Heart right ventricle (tissue), 16 donors: ENCODE measurements at regions of chr12 and their contacts with region 1.

Region 1: DNA sequence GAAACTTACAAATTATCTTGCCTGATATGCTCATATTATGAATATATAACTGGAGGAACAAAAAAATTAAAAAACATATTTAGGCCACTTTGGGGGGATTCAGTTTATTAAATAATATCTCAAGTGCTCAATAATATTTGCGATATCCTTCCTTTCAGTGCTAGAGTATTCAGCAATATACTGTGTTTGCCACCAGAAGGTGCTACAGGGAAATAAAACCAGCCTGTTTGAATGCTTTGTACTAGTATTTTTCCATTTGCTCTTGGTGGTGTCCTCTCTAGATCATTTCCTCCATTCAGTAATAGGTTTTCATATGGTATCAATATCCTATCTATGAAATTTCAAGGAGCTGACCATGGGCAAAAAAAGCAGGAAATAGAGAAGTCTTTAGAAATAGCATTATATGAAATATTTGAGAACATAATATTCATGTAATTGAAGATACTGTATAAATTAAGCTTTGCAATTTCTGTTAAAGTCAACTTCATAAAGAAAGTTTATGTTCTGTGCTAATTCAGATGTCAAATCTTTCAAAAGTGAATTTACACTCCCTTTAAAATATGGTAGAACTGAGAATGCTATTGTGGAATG is 106.2 kb upstream of the NAV3 start:
- DNase-seq: no peak
- ATAC-seq: peak in 6 of 8 donors; percentile 75 to 88 (median 79)
- H3K4me3 ChIP-seq: no peak overlapping the region
- H3K27ac ChIP-seq: no peak overlapping the region
- H3K4me1 ChIP-seq: peaks cover 0 to 14% (median 3%) of the 10 kb centered on the region in 9 donors
- H3K27me3 ChIP-seq: no peaks in the 10 kb centered on the region
- CTCF ChIP-seq: peak; percentile 36 to 87 (median 68)

Region 2: DNA sequence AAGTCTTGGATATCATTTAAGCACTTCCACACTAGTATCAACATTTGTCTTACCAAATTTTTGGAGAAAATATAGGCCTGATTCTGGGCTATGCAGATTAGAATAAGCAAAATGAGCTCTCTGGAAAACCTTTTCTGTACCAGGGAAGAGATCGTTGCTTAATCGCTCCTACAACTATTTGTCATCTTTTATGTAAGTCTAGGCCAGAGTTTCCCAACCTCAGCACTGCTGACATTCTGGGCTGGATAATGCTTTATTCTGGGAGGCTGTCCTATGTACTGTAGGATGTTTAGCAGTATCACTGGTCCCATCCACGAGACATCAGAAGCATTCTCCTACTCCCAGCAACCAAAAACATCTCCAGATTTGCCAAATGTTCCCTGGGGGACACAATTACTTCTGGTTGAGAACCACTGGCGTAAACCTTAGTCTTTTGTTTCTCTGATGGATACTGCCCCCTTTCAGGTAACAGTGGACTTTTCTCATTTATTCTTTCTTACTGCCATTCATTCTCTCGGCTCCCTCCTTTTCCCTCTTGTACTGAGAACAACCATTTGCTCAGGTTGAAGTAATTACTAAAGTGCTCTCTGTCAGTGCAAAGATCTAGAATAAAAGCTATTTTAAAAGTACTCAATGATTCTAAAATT is 342.2 kb before region 1 on chr12:
- intact Hi-C with region 1: no loop called
- DNase-seq: no peak
- ATAC-seq: peak in 1 of 8 donors; percentile 27
- H3K4me3 ChIP-seq: no peak overlapping the region
- H3K27ac ChIP-seq: no peak overlapping the region
- H3K4me1 ChIP-seq: peaks cover 0 to 5% (median 0%) of the 10 kb centered on the region in 9 donors
- H3K27me3 ChIP-seq: no peaks in the 10 kb centered on the region
- CTCF ChIP-seq: no peak

Region 3: GRCh38 chr12:77855548-77855947 is 131.1 kb after region 1 on chr12:
- intact Hi-C with region 1: loop called in 1 of 10 experiments (anchors 10 kb)
- DNase-seq: peak; percentile 20 to 43
- ATAC-seq: peak; percentile 71 to 100 (median 86)
- H3K4me3 ChIP-seq: peak overlapping the region in 4 of 10 donors; percentile 11 to 32 (median 18)
- H3K27ac ChIP-seq: peak overlapping the region in 6 of 10 donors; percentile 25 to 62 (median 46)
- H3K4me1 ChIP-seq: peaks cover 0 to 42% (median 6%) of the 10 kb centered on the region in 9 donors
- H3K27me3 ChIP-seq: no peaks in the 10 kb centered on the region
- CTCF ChIP-seq: no peak

Region 4: GRCh38 chr12:77914081-77914488 is 189.6 kb after region 1 on chr12:
- intact Hi-C with region 1: loop called in 1 of 10 experiments (anchors 5 kb)
- DNase-seq: no peak
- ATAC-seq: no peak
- H3K4me3 ChIP-seq: no peak overlapping the region
- H3K27ac ChIP-seq: no peak overlapping the region
- H3K4me1 ChIP-seq: peaks cover 0 to 7% (median 0%) of the 10 kb centered on the region in 9 donors
- H3K27me3 ChIP-seq: no peaks in the 10 kb centered on the region
- CTCF ChIP-seq: peak in 4 of 9 donors; percentile 18 to 40 (median 22)

Region 5: DNA sequence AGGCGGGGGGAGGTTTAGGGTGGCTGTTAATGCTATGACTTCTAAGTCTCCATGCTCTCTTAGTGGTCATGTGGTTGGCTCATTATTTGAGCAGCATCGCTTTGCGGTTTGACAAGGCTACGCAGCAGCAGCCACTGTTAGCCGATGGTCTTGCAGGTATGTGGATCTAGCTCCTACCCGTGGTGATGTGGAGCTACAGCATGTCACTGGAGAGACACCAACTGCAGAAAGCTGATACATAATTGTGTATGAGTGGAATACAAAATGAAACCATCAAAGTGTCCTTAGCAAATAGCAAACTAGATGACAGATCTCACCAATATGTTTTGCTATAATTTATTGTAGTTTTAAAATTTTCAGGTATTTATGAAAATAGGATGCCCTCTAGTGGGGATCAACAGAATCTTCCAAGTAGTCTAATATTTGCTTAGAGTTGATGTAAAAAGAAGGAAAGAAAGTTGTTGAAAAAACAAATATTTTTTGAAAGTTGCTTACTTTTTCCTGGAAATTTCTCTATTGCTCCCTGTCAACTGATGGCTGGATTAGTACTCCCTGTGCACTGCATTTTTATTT is 201.2 kb after region 1 on chr12:
- intact Hi-C with region 1: loop called (anchors 1 to 5 kb)
- DNase-seq: peak; percentile 41 to 72
- ATAC-seq: peak; percentile 84 to 98 (median 92)
- H3K4me3 ChIP-seq: peak overlapping the region in 3 of 10 donors; percentile 16 to 25 (median 21)
- H3K27ac ChIP-seq: no peak overlapping the region
- H3K4me1 ChIP-seq: peaks cover 0 to 8% (median 3%) of the 10 kb centered on the region in 9 donors
- H3K27me3 ChIP-seq: no peaks in the 10 kb centered on the region
- CTCF ChIP-seq: peak; percentile 85 to 99 (median 94)